Mammary epithelial cell (primary cell): ENCODE measurements at regions of chr13 and their contacts with region 1.

Region 1: DNA sequence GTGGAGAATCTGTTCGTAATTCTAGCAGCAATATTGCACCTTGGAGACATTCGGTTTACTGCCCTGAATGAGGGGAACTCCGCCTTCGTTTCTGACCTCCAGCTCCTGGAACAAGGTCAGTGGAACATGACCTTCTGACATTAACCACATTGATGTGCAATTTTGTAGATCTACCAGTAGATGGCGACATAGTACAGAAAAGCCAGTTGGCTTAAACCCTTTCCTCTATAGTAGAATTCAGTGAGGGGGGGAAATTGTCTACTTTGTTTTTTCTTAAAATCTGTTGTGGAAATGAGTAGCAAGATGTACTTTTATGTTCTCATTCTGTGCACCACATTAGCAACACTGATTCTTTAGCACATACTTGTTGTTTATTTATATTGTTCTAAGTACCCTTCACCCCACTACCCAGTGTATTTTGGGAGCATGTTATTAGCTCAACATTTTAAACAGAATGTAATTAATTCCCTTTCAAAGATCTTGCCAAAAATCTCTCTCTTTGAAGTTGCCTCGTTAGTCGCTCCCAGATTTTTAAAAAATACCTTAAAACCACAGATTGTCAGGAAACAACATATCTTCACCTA is 332.2 kb downstream of the MYO16 start:
- DNase-seq: peak; percentile 50
- H3K4me3 ChIP-seq: no peak overlapping the region
- H3K27ac ChIP-seq: peak overlapping the region; percentile 18
- H3K4me1 ChIP-seq: peaks cover 39% of the 10 kb centered on the region
- H3K27me3 ChIP-seq: no peaks in the 10 kb centered on the region
- CTCF ChIP-seq: peak; percentile 77 to 79

Region 2: GRCh38 chr13:108463340-108463739 is 498.3 kb before region 1 on chr13:
- CTCF ChIA-PET with region 1: no interaction called
- dilution Hi-C with region 1: no loop called
- in situ Hi-C with region 1: no loop called
- intact Hi-C with region 1: loop called (anchors 5 kb)
- DNase-seq: peak; percentile 82
- H3K4me3 ChIP-seq: no peak overlapping the region
- H3K27ac ChIP-seq: peak overlapping the region; percentile 92
- H3K4me1 ChIP-seq: peaks cover 5% of the 10 kb centered on the region
- H3K27me3 ChIP-seq: no peaks in the 10 kb centered on the region
- CTCF ChIP-seq: no peak

Region 3: GRCh38 chr13:108769213-108770070 is 192.2 kb before region 1 on chr13:
- CTCF ChIA-PET with region 1: no interaction called
- dilution Hi-C with region 1: no loop called
- in situ Hi-C with region 1: no loop called
- intact Hi-C with region 1: no loop called
- DNase-seq: peak; percentile 56
- H3K4me3 ChIP-seq: no peak overlapping the region
- H3K27ac ChIP-seq: no peak overlapping the region
- H3K4me1 ChIP-seq: no peaks in the 10 kb centered on the region
- H3K27me3 ChIP-seq: peaks cover 6% of the 10 kb centered on the region
- CTCF ChIP-seq: no peak

Region 4: GRCh38 chr13:108850691-108851090 is 110.9 kb before region 1 on chr13:
- CTCF ChIA-PET with region 1: no interaction called
- dilution Hi-C with region 1: no loop called
- in situ Hi-C with region 1: no loop called
- intact Hi-C with region 1: no loop called
- DNase-seq: no peak
- H3K4me3 ChIP-seq: no peak overlapping the region
- H3K27ac ChIP-seq: no peak overlapping the region
- H3K4me1 ChIP-seq: no peaks in the 10 kb centered on the region
- H3K27me3 ChIP-seq: no peaks in the 10 kb centered on the region
- CTCF ChIP-seq: no peak

Region 5: GRCh38 chr13:109145631-109146030 is 184.0 kb after region 1 on chr13:
- CTCF ChIA-PET with region 1: no interaction called
- dilution Hi-C with region 1: no loop called
- in situ Hi-C with region 1: loop called (anchors 5 to 10 kb)
- intact Hi-C with region 1: loop called (anchors 1 kb)
- DNase-seq: peak; percentile 72
- H3K4me3 ChIP-seq: no peak overlapping the region
- H3K27ac ChIP-seq: peak overlapping the region; percentile 99
- H3K4me1 ChIP-seq: peaks cover 38% of the 10 kb centered on the region
- H3K27me3 ChIP-seq: no peaks in the 10 kb centered on the region
- CTCF ChIP-seq: peak; percentile 93 to 98

Region 6: GRCh38 chr13:109275852-109276251 is 314.2 kb after region 1 on chr13:
- CTCF ChIA-PET with region 1: no interaction called
- dilution Hi-C with region 1: no loop called
- in situ Hi-C with region 1: loop called (anchors 25 kb)
- intact Hi-C with region 1: loop called (anchors 2 kb)
- DNase-seq: peak; percentile 40
- H3K4me3 ChIP-seq: no peak overlapping the region
- H3K27ac ChIP-seq: no peak overlapping the region
- H3K4me1 ChIP-seq: peaks cover 26% of the 10 kb centered on the region
- H3K27me3 ChIP-seq: no peaks in the 10 kb centered on the region
- CTCF ChIP-seq: peak; percentile 39 to 52

Region 7: DNA sequence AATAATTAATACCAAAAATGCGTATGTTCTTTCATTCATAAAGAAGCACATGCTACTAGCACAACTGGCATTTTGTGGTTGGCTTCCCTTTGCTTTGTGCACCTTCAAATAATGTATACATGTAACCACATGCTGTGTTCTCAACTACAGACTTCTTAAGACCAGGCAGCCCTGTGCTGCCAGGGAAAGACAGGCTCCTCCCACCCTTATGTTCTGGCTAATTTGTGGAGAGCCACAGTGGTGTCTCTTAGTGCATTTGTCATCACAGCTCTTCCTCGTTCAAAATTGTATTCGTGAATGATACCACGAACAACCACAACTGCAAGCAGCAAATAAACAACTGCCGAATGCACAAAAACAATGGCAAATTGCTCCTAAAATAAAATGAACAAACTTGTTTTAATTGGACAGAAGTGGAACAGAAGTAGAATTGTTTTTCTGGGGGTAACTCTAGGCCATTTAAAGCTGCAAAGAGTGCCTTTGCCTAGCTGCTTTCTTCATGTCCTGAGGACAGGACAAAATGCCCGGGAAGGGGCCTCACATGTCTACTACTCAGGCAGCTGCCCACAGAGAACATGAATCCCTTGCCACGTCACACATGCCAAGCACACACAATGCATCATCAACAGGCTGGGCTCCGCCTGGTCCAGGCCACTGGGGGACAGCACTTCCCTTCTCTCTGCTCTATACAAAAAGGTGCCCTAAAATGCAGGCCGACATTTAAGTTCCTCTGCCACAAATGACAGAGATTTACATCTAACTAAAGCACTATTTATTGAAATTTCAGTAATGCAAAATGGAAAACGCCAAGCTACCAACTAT is 803.0 kb after region 1 on chr13:
- CTCF ChIA-PET with region 1: no interaction called
- dilution Hi-C with region 1: no loop called
- in situ Hi-C with region 1: no loop called
- intact Hi-C with region 1: loop called (anchors 5 kb)
- DNase-seq: peak; percentile 59
- H3K4me3 ChIP-seq: no peak overlapping the region
- H3K27ac ChIP-seq: no peak overlapping the region
- H3K4me1 ChIP-seq: peaks cover 45% of the 10 kb centered on the region
- H3K27me3 ChIP-seq: no peaks in the 10 kb centered on the region
- CTCF ChIP-seq: peak; percentile 25 to 37

Region 8: DNA sequence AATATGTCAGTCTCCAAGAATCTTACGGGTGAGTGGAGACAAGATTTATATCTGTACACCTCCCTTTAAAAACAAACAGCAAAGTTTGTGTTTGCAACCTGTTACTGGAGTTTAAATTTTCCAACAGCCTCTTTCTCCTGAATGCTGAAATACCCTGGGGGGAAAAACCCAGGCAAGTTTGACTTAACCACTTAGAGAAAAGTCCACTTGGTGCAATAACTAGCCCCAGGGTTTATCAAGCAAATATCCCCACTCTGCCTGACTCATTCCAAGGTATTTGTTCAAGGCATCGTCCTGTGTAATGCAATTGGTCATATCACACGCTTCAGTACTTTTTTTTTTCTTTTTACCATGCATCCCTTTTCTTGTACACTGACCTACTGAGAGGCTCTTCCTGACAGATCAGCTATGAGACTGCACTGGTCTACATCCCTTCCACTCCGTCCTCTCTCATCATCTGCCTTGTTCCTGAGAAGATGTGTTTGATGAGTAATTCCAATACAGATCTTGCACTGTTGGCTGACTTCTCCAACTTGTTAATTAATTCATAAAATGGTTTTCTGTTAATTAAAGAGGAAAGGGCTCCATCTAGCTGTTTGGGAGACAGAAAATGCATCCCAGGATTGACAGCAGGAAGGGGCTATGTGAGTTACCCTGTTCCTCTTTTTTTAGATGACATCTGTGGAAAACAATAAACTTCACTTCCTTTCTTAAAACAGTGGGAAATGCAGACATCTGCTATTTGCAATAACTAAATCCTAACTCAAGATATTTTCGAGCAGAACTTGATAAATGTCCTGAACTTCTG is 1037.3 kb after region 1 on chr13:
- CTCF ChIA-PET with region 1: no interaction called
- dilution Hi-C with region 1: no loop called
- in situ Hi-C with region 1: no loop called
- intact Hi-C with region 1: loop called (anchors 1 kb)
- DNase-seq: peak; percentile 97
- H3K4me3 ChIP-seq: no peak overlapping the region
- H3K27ac ChIP-seq: peak overlapping the region; percentile 59
- H3K4me1 ChIP-seq: peaks cover 42% of the 10 kb centered on the region
- H3K27me3 ChIP-seq: no peaks in the 10 kb centered on the region
- CTCF ChIP-seq: peak; percentile 8 to 35